ENCODE measurements at regions of chr2 and their contacts with region 1.

Region 1: GRCh38 chr2:216551234-216551633 is 52.6 kb downstream of the RPL37A start:
- DNase-seq: peak; percentile 85
- H3K4me3 ChIP-seq: no peak overlapping the region
- H3K27ac ChIP-seq: no peak overlapping the region
- H3K4me1 ChIP-seq: peaks cover 6% of the 10 kb centered on the region
- H3K27me3 ChIP-seq: no peaks in the 10 kb centered on the region
- CTCF ChIP-seq: no peak
- POLR2A ChIP-seq: no peak

Region 2: DNA sequence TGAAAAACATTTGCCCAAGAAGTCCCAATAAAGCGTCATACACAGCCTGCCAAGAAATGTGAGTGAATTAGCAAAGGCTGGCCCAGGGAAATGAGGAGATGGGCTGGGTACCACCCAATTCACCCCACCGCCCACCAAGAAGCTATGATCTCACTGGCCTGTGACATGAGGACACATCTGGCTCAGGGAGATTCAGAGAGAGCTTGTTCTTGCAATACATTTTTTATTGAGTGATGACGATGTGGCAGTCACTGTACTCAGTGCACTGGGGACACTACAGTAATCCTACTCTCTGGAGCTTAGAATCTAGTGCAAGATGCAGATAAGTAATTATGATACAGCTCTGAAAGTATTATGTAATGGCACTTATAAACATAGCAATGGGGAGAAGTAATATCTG is 17.3 kb after region 1 on chr2:
- CTCF ChIA-PET with region 1: interaction called, 3 read pairs
- POLR2A ChIA-PET with region 1: no interaction called
- dilution Hi-C with region 1: no loop called
- intact Hi-C with region 1: loop called (anchors 2 kb)
- DNase-seq: no peak
- H3K4me3 ChIP-seq: no peak overlapping the region
- H3K27ac ChIP-seq: no peak overlapping the region
- H3K4me1 ChIP-seq: no peaks in the 10 kb centered on the region
- H3K27me3 ChIP-seq: peaks cover 4 to 10% of the 10 kb centered on the region in 2 experiments
- CTCF ChIP-seq: no peak
- POLR2A ChIP-seq: no peak

Region 3: DNA sequence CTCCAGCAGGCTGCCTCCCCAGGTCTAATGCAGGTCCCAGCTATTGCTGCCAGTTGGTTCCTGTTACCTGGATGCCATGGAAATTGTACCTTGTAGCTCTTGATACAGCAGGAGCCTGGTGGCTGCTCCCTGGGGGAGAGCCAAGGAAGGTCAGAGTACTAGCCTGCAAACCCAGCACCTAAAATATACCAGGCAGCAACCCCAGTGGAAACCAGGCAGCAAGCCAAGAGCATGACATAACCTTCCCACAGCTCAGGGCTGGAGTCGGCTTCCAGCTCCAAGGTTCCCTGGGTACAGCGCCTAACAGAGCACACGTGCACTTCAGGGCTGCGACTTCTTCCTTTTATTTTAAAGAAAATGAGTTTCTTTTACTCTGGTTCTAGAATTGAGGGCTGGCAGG is 278.3 kb after region 1 on chr2:
- CTCF ChIA-PET with region 1: no interaction called
- POLR2A ChIA-PET with region 1: no interaction called
- dilution Hi-C with region 1: no loop called
- intact Hi-C with region 1: no loop called
- DNase-seq: no peak
- H3K4me3 ChIP-seq: no peak overlapping the region
- H3K27ac ChIP-seq: no peak overlapping the region
- H3K4me1 ChIP-seq: no peaks in the 10 kb centered on the region
- H3K27me3 ChIP-seq: no peaks in the 10 kb centered on the region
- CTCF ChIP-seq: no peak
- POLR2A ChIP-seq: no peak